ENCODE measurements at regions of chr16 and their contacts with region 1.

Region 1: DNA sequence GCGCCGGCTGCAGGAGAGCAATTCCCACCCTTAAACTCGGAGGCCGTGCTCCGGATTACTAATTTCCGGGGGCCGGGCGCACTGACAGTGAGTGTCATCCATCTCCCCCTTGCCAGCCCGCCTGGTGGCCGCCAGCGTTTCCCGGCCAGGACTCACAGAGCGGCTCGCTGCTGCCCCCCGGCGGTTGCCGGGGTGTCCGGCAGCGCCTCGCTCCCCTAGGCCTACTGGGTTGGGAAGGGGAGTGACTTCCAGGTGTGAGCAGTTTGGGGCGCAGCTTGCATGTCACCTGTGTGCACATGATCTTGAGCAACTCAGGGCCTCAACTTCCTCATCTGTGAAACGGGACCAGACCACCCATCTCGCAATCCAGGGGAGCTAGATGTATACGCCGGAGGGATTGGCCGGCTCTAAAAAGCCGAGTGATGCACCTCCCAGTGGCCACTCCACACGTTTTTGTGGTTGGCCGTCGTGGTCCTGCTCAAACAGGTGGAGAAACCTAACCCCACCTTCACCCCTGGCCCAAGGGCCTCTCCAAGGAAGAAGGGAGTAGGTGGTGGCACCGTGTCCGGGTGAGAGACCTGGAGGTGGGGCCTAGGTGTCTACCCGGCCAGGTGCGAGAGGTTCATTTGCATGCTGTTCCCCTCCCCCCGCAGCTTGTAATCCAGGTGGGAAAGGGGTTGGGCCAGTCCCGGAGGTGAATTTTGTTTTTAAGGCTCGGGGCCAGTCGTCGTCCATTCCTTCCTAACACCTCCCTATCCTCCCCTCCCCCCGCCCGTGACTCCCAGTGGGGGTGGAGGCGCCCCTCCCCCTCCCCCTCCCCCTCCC is 2.4 kb upstream of the GSE1 start:
- H3K4me3 Mint-ChIP-seq: peak overlapping the region; percentile 42
- H3K27ac Mint-ChIP-seq: peak overlapping the region; percentile 63
- H3K4me1 Mint-ChIP-seq: peaks cover 40% of the 10 kb centered on the region
- H3K27me3 Mint-ChIP-seq: peaks cover 13% of the 10 kb centered on the region

Region 2: GRCh38 chr16:85286970-85287824 is 323.5 kb before region 1 on chr16:
- intact Hi-C with region 1: no loop called
- H3K4me3 Mint-ChIP-seq: no peak overlapping the region
- H3K27ac Mint-ChIP-seq: no peak overlapping the region
- H3K4me1 Mint-ChIP-seq: peaks cover 38% of the 10 kb centered on the region
- H3K27me3 Mint-ChIP-seq: peaks cover 11% of the 10 kb centered on the region

Region 3: DNA sequence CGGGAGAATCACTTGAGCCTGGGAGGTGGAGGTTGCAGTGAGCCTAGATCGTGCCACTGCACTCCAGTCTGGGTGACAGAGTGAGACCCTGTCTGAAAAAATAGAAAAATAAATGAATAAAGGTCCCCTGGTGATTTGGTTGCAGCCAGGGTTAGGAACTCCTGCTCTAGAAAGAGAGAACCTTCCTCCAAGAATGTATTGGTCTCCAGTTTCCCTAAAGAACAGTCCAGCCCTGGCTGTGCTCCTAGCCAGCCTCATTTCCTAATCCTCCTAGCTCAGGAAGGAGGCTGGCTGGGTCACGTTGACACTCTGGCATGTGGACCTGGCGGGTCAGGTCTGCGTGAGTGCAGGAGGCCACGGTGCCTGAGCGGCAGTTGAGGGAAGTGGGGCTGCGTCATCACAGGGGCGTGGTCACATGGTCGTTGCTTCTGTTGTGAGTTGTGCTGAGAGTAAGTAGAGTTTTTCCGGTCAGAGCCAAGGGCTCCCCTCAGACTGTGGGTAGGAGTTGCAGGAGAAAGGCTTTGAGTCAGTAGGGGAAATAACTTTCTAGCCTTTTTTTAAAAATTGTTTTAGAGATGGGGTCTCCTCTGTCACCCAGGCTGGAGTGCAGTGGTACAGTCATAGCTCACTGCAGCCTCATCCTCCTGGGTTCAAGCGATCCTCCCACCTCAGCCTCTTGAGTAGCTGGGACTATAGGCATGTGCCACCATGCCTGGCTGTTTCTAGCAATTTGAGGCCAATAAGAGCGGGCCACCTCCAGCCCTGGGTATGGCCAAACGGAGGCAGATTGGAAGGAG is 304.5 kb before region 1 on chr16:
- intact Hi-C with region 1: loop called (anchors 10 kb)
- H3K4me3 Mint-ChIP-seq: no peak overlapping the region
- H3K27ac Mint-ChIP-seq: peak overlapping the region; percentile 69
- H3K4me1 Mint-ChIP-seq: peaks cover 74% of the 10 kb centered on the region
- H3K27me3 Mint-ChIP-seq: peaks cover 32% of the 10 kb centered on the region

Region 4: DNA sequence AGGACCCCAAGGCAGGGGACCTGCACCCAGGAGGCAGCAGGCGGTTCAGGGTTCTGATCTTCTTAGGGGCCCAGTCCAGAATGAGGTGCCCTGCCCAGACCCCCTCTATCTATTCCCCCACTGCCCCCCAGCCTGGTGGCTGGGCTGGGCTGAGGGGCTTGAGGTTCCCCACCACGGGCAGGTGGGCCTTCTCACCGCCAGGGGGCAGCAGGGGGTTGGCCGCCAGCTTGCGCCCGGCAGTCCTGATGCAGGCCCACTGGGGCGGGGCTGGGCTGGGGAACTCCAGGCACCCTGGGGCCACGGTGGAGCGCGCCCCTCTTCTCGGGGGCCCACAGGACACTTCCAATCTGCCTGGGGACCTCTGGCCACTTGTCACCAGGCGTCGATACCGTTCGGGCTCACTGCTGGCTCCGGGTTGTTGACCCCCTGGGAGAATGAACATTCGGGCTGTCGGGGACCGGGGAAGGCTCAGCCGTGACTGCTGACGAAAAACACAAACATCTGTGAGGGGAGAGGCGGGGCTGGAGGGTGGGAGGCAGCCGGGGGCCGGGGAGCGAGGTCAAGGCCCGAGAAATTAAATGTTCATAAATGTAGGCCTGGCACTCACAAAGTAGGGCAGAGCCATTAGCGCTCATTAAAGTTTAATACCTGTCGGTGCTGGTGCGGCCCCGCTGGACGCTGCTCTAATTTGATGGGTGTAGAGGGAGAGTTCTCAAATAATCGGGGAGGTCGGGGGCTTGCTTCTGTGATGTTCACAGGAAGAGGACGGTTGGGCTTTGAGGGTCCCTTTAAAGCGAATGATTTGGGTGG is 216.8 kb before region 1 on chr16:
- intact Hi-C with region 1: loop called (anchors 1 kb)
- H3K4me3 Mint-ChIP-seq: no peak overlapping the region
- H3K27ac Mint-ChIP-seq: no peak overlapping the region
- H3K4me1 Mint-ChIP-seq: peaks cover 19% of the 10 kb centered on the region
- H3K27me3 Mint-ChIP-seq: peaks cover 42% of the 10 kb centered on the region